ENCODE measurements at regions of chr3 and their contacts with region 1.

Region 1: GRCh38 chr3:165614337-165614736 is 222.9 kb downstream of the BCHE start:
- DNase-seq: no peak
- H3K4me3 ChIP-seq: no peak overlapping the region
- H3K27ac ChIP-seq: peak overlapping the region; percentile 19 to 55 (median 29)
- H3K4me1 ChIP-seq: peaks cover 0 to 40% (median 18%) of the 10 kb centered on the region in 4 donors
- H3K27me3 ChIP-seq: no peaks in the 10 kb centered on the region
- CTCF ChIP-seq: no peak
- EP300 ChIP-seq: no peak
- POLR2A ChIP-seq: no peak

Region 2: GRCh38 chr3:165805946-165806561 is 191.7 kb after region 1 on chr3:
- intact Hi-C with region 1: loop called (anchors 10 kb)
- DNase-seq: no peak
- H3K4me3 ChIP-seq: peak overlapping the region; percentile 8 to 39 (median 36)
- H3K27ac ChIP-seq: peak overlapping the region; percentile 63 to 79 (median 70)
- H3K4me1 ChIP-seq: peaks cover 0 to 9% (median 6%) of the 10 kb centered on the region in 4 donors
- H3K27me3 ChIP-seq: no peaks in the 10 kb centered on the region
- CTCF ChIP-seq: no peak
- EP300 ChIP-seq: no peak
- POLR2A ChIP-seq: no peak

Region 3: DNA sequence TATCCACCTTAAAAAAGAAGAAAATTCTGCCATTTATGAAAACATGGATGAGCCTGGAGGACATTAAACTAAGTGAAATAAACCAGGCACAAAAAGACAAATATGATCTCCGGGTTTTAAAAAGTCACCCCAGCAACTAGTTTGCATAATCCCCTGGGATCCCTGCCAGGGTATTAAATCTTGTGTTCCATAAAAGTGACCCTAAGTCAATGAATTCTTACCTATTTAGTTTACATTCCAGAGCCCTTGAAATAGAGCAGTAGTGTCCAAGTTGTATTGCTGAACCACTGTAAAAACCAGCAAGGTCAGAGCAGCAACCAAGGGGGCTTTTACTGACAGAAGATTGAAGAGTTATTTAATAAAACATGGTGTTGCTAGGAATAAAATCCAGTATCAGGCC is 939.7 kb after region 1 on chr3:
- intact Hi-C with region 1: loop called (anchors 10 kb)
- DNase-seq: no peak
- H3K4me3 ChIP-seq: no peak overlapping the region
- H3K27ac ChIP-seq: peak overlapping the region in 3 of 4 donors; percentile 49 to 60 (median 50)
- H3K4me1 ChIP-seq: peaks cover 0 to 22% (median 20%) of the 10 kb centered on the region in 4 donors
- H3K27me3 ChIP-seq: no peaks in the 10 kb centered on the region
- CTCF ChIP-seq: no peak
- EP300 ChIP-seq: peak in 2 of 4 donors; percentile 41 to 76
- POLR2A ChIP-seq: no peak

Measured in sigmoid colon (tissue), 7 donors.